Activated T-helper 1 cell treated with anti-CD3 and anti-CD28 coated beads, Interleukin-12 subunit alpha, Interleukin-12 subunit beta, Interleukin-2, Interleukin-4 antibody, amounts not matched to agents 30 ng/mL and 10 ng/mL and 1 ng/mL, durations not matched to agents 14 hours and 24 hours and 36 hours (primary cell): ENCODE measurements at regions of chr16 and their contacts with region 1.

Region 1: DNA sequence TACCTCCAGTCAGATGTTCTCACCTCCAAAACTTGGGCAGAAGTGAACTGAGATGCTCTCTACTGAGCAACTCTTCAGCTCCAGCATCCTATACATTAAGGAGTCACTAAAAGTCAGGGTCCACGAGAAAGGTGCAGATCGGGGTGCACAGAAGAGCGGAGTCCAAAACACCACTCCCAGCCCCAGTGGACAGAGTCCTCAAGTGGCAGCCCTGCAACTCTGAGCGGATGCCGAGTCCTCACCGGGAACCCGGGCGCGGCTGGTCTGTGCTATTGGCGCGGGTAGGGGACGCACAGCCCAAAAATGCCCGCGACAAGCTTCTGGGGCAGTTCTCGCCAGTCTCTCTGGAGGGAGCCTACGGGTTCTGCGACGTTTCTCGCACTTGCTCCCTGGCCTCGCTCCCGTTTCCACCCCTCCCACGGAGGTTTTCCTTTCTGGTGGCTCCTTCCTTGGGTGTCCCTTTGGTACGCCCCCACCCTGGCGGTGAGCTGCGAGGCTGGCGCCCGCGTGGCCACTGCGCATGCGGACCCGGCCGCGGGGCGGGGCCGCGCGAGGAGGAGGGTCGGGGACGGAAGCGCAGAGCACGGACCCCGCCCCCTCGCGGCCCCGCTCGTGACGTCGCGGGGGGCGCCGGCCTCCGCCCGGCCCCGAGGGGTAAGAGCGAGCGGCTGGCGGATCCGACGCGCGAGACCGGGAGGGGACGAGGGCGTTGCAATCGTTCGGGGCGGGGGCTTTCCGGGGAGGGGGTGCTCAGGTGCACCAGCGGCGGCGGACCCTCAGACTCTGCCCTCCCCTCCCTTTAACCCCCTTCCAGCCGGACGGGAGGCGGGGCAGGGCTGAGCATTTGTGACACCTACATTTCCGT is at the start of gene TMEM219:
- DNase-seq: peak; percentile 95
- H3K4me3 Mint-ChIP-seq: peak within 1 kb of the TSS; percentile 86
- H3K27ac Mint-ChIP-seq: peak within 1 kb of the TSS; percentile 83
- H3K4me1 Mint-ChIP-seq: peaks cover 24% of the 10 kb centered on the region
- H3K27me3 Mint-ChIP-seq: no peaks in the 10 kb centered on the region
- total RNA-seq, gene TMEM219: 41.5 and 43.7 TPM in 2 replicates

Region 2: GRCh38 chr16:29973384-29974246 is 11.9 kb after region 1 on chr16 and contains the start of gene TAOK2:
- intact Hi-C with region 1: loop called (anchors 1 kb)
- DNase-seq: peak; percentile 97
- H3K4me3 Mint-ChIP-seq: peak within 1 kb of the TSS; percentile 92
- H3K27ac Mint-ChIP-seq: peak within 1 kb of the TSS; percentile 91
- H3K4me1 Mint-ChIP-seq: peaks cover 36% of the 10 kb centered on the region
- H3K27me3 Mint-ChIP-seq: no peaks in the 10 kb centered on the region
- total RNA-seq, gene TAOK2: 38.5 and 39.7 TPM in 2 replicates

Region 3: DNA sequence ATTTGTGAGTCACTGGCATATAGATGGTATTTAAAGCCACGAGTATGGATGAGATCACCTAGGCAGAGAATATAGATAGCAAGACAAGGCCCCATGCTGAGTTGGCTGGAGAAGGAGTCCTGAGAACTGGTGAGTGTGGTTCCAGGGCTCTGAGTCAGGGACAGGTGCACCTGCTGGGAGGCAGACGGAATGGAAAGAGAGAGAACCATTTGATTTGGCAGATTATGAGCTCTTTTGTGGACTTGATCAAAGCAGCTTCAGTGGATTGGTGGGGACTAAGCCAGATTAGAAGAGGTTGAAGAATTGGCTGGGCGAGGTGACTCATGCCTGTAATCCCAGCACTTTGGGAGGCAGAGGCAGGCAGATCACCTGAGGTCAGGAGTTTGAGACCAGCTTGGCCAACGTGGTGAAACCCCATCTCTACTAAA is 57.0 kb after region 1 on chr16:
- intact Hi-C with region 1: loop called (anchors 2 kb)
- DNase-seq: no peak
- H3K4me3 Mint-ChIP-seq: no peak overlapping the region
- H3K27ac Mint-ChIP-seq: peak overlapping the region; percentile 1
- H3K4me1 Mint-ChIP-seq: peaks cover 17% of the 10 kb centered on the region
- H3K27me3 Mint-ChIP-seq: peaks cover 12% of the 10 kb centered on the region

Region 4: GRCh38 chr16:30163538-30163937 is 201.8 kb after region 1 on chr16:
- intact Hi-C with region 1: no loop called
- DNase-seq: no peak
- H3K4me3 Mint-ChIP-seq: no peak overlapping the region
- H3K27ac Mint-ChIP-seq: no peak overlapping the region
- H3K4me1 Mint-ChIP-seq: peaks cover 22% of the 10 kb centered on the region
- H3K27me3 Mint-ChIP-seq: no peaks in the 10 kb centered on the region

Region 5: GRCh38 chr16:30941600-30942425 is 980.1 kb after region 1 on chr16:
- intact Hi-C with region 1: no loop called
- DNase-seq: peak; percentile 64
- H3K4me3 Mint-ChIP-seq: peak overlapping the region; percentile 56
- H3K27ac Mint-ChIP-seq: no peak overlapping the region
- H3K4me1 Mint-ChIP-seq: peaks cover 28% of the 10 kb centered on the region
- H3K27me3 Mint-ChIP-seq: no peaks in the 10 kb centered on the region